ENCODE measurements at regions of chr1 and their contacts with region 1.

Region 1: GRCh38 chr1:81430955-81431623 is 369.6 kb upstream of the ADGRL2 start:
- DNase-seq: no peak
- ATAC-seq: peak in 2 of 4 donors; percentile 38 to 77
- H3K4me3 ChIP-seq: no peak overlapping the region
- H3K27ac ChIP-seq: peak overlapping the region; percentile 4 to 79 (median 54)
- H3K4me1 ChIP-seq: peaks cover 0 to 43% (median 10%) of the 10 kb centered on the region in 12 donors
- H3K27me3 ChIP-seq: no peaks in the 10 kb centered on the region
- CTCF ChIP-seq: no peak
- POLR2A ChIP-seq: no peak

Region 2: GRCh38 chr1:81470275-81470674 is 39.2 kb after region 1 on chr1:
- intact Hi-C with region 1: loop called in 1 of 10 experiments (anchors 5 kb)
- DNase-seq: no peak
- ATAC-seq: no peak
- H3K4me3 ChIP-seq: no peak overlapping the region
- H3K27ac ChIP-seq: no peak overlapping the region
- H3K4me1 ChIP-seq: no peaks in the 10 kb centered on the region
- H3K27me3 ChIP-seq: no peaks in the 10 kb centered on the region
- CTCF ChIP-seq: no peak
- POLR2A ChIP-seq: no peak